ENCODE measurements at regions of chr13 and their contacts with region 1.

Region 1: DNA sequence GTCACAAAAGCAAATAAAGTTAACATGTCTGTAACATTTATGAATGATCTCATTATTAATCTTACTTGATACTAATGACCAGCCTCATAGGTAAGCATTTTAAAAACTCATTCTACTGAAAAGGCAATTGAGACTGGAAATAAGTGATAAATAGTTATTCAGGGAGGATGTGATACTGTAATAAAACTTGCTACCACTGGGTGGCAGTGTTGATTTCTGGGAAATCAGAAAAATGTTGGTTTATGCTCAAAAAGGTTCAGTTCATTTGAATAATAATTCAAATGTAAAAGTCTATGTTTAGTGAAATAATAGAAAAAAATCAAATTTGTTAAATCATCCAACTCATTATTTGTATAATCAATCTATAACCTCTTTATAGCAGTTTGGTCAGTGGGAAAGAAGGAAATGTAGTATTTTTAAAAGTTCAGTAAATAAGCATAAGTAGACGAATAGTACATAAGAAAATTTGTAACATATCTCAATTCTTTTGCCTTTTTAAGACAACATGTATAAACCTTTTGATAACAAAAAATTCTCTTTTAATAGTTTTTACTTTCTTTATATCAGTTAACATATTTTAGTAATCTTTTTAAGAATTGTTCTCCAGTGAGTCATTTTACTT is 9.6 kb downstream of the ABHD13 start:
- DNase-seq: peak; percentile 45
- H3K4me3 Mint-ChIP-seq: no peak overlapping the region
- H3K27ac Mint-ChIP-seq: no peak overlapping the region
- H3K4me1 Mint-ChIP-seq: peaks cover 49% of the 10 kb centered on the region
- H3K27me3 Mint-ChIP-seq: no peaks in the 10 kb centered on the region

Region 2: DNA sequence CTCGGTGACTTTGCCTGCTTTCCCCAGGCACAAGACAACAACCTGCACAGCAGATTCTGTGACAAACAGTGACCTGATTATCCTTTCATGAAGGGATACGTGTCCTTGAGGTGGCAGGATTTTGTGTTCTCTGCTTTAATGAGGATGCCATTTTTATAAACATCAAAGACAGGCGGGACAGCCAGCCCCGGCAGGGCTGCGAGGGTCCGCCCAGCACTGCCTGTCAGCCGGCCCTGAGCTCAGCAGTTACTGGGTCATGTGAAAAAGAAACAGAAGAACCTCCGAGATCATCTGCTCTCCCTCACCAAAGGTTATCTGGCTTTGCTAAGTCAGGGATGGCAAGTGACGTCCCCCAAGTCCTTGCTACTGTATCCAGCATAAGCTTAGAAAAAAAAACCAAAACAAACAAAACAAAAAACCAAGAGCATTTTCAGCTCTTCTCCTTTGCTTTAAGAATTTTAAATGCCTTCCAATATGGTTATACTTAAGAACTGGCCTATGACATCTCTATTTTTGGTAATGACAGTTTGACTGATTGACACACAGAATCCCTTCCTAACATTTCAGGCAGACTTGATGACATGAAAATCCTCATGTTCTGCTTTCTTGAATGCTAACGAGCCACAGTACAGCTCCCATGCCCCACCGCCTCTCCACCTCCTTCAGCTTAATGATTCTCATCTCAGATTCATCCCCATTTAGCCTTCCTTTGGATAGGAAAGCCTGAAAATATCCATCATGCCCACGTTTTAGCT is 993.3 kb before region 1 on chr13:
- CTCF ChIA-PET with region 1: no interaction called
- intact Hi-C with region 1: no loop called
- DNase-seq: no peak
- H3K4me3 Mint-ChIP-seq: no peak overlapping the region
- H3K27ac Mint-ChIP-seq: no peak overlapping the region
- H3K4me1 Mint-ChIP-seq: no peaks in the 10 kb centered on the region
- H3K27me3 Mint-ChIP-seq: no peaks in the 10 kb centered on the region

Region 3: DNA sequence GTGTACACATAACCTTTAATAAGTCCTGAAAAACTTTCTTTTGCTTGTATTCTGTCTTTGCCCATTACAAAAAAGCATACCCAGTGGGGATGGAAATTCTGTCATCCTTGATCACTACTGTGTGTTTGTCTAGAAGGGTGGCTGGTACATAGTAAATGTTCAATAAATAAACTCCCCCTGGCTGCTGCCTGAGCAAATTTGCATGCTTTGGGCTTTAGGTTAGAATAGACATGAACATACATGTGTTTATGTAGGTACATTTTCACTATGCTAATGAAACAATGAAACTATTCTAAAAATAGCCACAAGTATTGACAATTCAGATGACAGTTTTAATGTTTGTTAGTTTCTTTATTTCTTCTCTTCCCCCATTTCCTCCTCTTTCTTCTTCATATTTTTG is 77.9 kb after region 1 on chr13:
- CTCF ChIA-PET with region 1: no interaction called
- intact Hi-C with region 1: loop called (anchors 5 kb)
- DNase-seq: no peak
- H3K4me3 Mint-ChIP-seq: no peak overlapping the region
- H3K27ac Mint-ChIP-seq: no peak overlapping the region
- H3K4me1 Mint-ChIP-seq: peaks cover 9% of the 10 kb centered on the region
- H3K27me3 Mint-ChIP-seq: no peaks in the 10 kb centered on the region

Region 4: GRCh38 chr13:108342369-108343289 is 114.9 kb after region 1 on chr13:
- CTCF ChIA-PET with region 1: interaction called, 3 read pairs
- intact Hi-C with region 1: loop called (anchors 1 kb)
- DNase-seq: peak; percentile 28
- H3K4me3 Mint-ChIP-seq: peak overlapping the region; percentile 4
- H3K27ac Mint-ChIP-seq: peak overlapping the region; percentile 56
- H3K4me1 Mint-ChIP-seq: peaks cover 24% of the 10 kb centered on the region
- H3K27me3 Mint-ChIP-seq: no peaks in the 10 kb centered on the region

Region 5: DNA sequence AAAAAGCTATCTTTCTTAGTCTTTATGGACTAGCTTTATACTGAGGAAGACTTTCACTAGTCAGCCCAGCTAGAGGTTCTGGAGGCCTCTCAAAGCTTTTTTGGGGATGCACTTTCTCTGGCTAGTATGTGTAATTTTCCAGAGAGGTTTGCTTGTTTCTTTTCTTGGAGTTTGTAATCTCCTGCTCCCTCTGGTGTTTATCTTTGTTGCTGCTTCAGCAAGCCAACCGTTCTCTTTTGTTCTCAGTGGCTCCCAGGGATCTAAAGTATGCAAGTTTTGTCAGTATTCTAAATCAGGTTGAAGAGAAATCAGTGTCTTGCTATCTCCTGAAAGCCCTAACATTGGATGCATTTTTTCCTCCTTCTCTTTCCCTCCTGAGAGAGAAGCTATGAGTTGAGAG is 280.5 kb after region 1 on chr13:
- CTCF ChIA-PET with region 1: no interaction called
- intact Hi-C with region 1: loop called (anchors 5 kb)
- DNase-seq: no peak
- H3K4me3 Mint-ChIP-seq: no peak overlapping the region
- H3K27ac Mint-ChIP-seq: no peak overlapping the region
- H3K4me1 Mint-ChIP-seq: peaks cover 3% of the 10 kb centered on the region
- H3K27me3 Mint-ChIP-seq: no peaks in the 10 kb centered on the region

Measured in activated naive CD4-positive, alpha-beta T cell treated with anti-CD3 and anti-CD28 coated beads for 36 hours (primary cell).